Ovary (tissue), 10 donors: ENCODE measurements at regions of chr16 and their contacts with region 1.

Region 1: GRCh38 chr16:81715358-81716196 is 63.5 kb upstream of the PLCG2 start:
- DNase-seq: no peak
- H3K4me3 ChIP-seq: no peak overlapping the region
- H3K27ac ChIP-seq: no peak overlapping the region
- H3K4me1 ChIP-seq: peaks cover 11% of the 10 kb centered on the region
- H3K27me3 ChIP-seq: no peaks in the 10 kb centered on the region
- CTCF ChIP-seq: no peak
- EP300 ChIP-seq: no peak
- POLR2A ChIP-seq: no peak

Region 2: DNA sequence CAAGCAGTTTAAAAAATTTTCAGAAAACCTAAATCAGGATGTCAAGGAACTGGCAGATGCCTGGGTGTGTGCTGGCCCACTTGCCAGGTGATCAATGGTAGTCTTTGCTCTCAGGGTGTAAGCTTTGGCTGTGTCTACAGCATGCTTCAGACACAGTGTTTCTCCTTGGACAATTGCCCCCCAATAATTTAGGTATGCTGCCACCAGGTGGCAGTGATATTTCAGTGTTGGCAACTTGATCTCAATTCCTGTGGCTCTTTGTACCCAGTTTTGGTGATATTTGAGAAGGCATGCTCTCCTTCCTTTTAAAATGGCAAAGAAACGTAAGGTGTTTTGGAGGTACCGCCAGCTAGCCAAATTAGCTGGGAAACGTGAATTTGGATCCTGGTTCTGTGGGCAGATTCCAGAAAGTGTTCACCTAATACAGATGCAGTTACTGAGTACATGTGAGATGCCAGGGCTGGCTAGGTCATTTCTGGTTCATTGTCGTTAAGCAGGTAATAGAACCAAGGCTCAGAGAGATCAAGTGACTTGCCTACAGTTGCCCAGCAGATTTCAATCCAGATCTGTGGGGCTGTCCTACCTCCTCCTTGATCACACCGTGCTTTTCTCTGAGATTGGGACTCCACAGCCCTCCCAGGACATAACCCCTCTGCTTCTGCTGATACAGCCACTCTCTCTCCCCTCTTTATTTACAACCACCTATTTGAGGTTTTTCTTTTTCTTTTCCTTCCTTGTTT is 92.0 kb before region 1 on chr16:
- intact Hi-C with region 1: loop called in 3 of 4 experiments (anchors 5 to 10 kb)
- DNase-seq: peak in 2 of 5 donors; percentile 39 to 49
- H3K4me3 ChIP-seq: no peak overlapping the region
- H3K27ac ChIP-seq: no peak overlapping the region
- H3K4me1 ChIP-seq: peaks cover 3% of the 10 kb centered on the region
- H3K27me3 ChIP-seq: no peaks in the 10 kb centered on the region
- CTCF ChIP-seq: peak in 2 of 3 donors; percentile 32 to 61
- EP300 ChIP-seq: no peak
- POLR2A ChIP-seq: no peak

Region 3: GRCh38 chr16:81855552-81856153 is 140.1 kb after region 1 on chr16:
- intact Hi-C with region 1: no loop called
- DNase-seq: no peak
- H3K4me3 ChIP-seq: no peak overlapping the region
- H3K27ac ChIP-seq: no peak overlapping the region
- H3K4me1 ChIP-seq: no peaks in the 10 kb centered on the region
- H3K27me3 ChIP-seq: no peaks in the 10 kb centered on the region
- CTCF ChIP-seq: no peak
- EP300 ChIP-seq: no peak
- POLR2A ChIP-seq: no peak

Region 4: GRCh38 chr16:82169861-82170845 is 454.6 kb after region 1 on chr16 and contains the start of gene MPHOSPH6:
- intact Hi-C with region 1: no loop called
- DNase-seq: peak; percentile 85 to 94 (median 89)
- H3K4me3 ChIP-seq: peak within 1 kb of the TSS; percentile 68
- H3K27ac ChIP-seq: peak within 1 kb of the TSS; percentile 9 to 66
- H3K4me1 ChIP-seq: peaks cover 3% of the 10 kb centered on the region
- H3K27me3 ChIP-seq: no peaks in the 10 kb centered on the region
- CTCF ChIP-seq: peak in 2 of 3 donors; percentile 13 to 53
- EP300 ChIP-seq: no peak
- POLR2A ChIP-seq: peak; percentile 21
- total RNA-seq, gene MPHOSPH6: 7.1 to 30.4 (median 13.1) TPM